WTC11 (cell line): ENCODE measurements at regions of chr4 and their contacts with region 1.

Region 1: DNA sequence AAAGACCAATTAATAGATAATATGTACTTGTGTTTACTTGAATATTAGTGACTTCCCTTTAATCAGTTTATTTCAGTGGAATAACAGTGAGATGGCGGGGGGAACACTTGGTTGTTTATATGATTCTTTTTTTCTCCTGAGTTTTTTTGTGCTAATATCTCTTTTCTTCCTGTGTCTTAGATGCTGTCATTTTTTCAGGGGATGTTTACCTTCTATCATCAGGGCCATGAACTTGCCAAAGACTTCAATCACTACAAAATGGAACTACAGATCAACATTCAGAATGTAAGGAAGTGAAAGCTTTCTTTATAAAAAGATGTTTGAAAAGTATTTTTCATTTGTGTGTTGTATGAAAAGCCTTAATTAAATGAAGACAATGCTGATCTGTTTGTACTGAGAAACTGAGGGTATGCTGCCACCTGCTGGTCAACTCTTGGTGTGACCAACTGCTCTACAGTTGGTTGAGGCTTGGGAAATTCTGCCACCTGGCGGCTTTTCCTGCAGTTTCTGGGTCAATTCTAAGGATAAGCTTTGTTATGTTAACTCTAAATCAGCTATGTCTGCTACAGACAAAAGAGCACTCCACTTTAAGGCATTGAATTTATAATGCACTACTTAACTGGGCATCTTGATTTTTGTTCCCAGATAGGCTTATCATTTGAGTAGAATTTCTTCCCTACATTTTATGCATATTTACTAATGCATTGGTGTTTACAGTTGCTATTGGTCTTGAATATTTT is 134.8 kb downstream of the ARHGAP10 start:
- DNase-seq: peak; percentile 95
- ATAC-seq: peak; percentile 87
- H3K4me3 Mint-ChIP-seq: peak overlapping the region; percentile 0; the same call in 1 of the 2 replicates
- H3K27ac Mint-ChIP-seq: peak overlapping the region; percentile 75
- H3K4me1 Mint-ChIP-seq: peaks cover 43% of the 10 kb centered on the region
- H3K27me3 Mint-ChIP-seq: no peaks in the 10 kb centered on the region
- CTCF ChIP-seq: peak; percentile 97

Region 2: GRCh38 chr4:147518846-147519767 is 347.6 kb before region 1 on chr4:
- CTCF ChIA-PET with region 1: interaction called, 35 read pairs
- POLR2A ChIA-PET with region 1: no interaction called
- DNase-seq: peak; percentile 70
- ATAC-seq: peak; percentile 87
- H3K4me3 Mint-ChIP-seq: no peak overlapping the region
- H3K27ac Mint-ChIP-seq: no peak overlapping the region
- H3K4me1 Mint-ChIP-seq: no peaks in the 10 kb centered on the region
- H3K27me3 Mint-ChIP-seq: no peaks in the 10 kb centered on the region
- CTCF ChIP-seq: peak; percentile 79

Region 3: DNA sequence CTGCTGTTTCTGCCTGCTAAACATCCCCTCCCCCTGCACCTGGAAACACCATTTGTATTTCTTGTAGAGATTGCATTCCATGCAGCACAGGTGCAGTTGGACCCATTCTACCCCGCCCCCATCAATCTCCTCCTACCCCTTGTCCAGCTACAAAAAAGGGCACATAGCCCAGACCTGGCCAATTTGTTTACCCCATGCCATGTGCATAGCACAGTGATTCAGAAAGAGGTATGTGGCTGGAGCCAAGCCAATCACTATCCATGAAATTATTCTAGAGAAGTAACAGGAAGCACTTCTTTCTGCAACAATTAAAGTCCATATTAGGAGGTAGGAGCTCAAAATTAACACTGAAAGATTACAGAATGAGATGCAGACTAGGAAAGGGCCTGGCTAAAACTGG is 269.7 kb before region 1 on chr4:
- CTCF ChIA-PET with region 1: interaction called, 48 read pairs
- POLR2A ChIA-PET with region 1: no interaction called
- DNase-seq: no peak
- ATAC-seq: peak; percentile 35; the same call in 1 of the 2 replicates
- H3K4me3 Mint-ChIP-seq: no peak overlapping the region
- H3K27ac Mint-ChIP-seq: no peak overlapping the region
- H3K4me1 Mint-ChIP-seq: peaks cover 20% of the 10 kb centered on the region
- H3K27me3 Mint-ChIP-seq: no peaks in the 10 kb centered on the region
- CTCF ChIP-seq: no peak

Region 4: DNA sequence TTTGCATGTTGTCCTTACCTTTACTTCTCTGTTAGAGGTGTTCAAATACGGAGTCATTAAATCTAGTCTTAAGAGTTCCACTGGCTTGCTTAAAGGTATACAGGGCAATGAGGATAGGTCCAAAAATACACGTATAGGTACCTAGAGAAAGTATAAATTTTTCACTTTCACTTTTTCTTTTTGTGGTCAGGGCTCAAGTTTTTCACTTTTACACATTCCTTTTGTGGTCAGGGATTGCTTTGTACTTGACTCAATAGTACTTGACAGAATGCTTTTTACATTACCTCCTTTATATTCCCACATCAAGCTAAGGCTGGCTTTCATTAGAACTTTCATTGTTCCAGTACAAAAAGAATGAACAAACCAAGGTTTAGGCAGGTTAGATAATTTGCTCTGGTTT is 227.8 kb before region 1 on chr4:
- CTCF ChIA-PET with region 1: interaction called, 21 read pairs
- POLR2A ChIA-PET with region 1: no interaction called
- DNase-seq: no peak
- ATAC-seq: no peak
- H3K4me3 Mint-ChIP-seq: no peak overlapping the region
- H3K27ac Mint-ChIP-seq: no peak overlapping the region
- H3K4me1 Mint-ChIP-seq: peaks cover 25% of the 10 kb centered on the region
- H3K27me3 Mint-ChIP-seq: no peaks in the 10 kb centered on the region
- CTCF ChIP-seq: no peak

Region 5: DNA sequence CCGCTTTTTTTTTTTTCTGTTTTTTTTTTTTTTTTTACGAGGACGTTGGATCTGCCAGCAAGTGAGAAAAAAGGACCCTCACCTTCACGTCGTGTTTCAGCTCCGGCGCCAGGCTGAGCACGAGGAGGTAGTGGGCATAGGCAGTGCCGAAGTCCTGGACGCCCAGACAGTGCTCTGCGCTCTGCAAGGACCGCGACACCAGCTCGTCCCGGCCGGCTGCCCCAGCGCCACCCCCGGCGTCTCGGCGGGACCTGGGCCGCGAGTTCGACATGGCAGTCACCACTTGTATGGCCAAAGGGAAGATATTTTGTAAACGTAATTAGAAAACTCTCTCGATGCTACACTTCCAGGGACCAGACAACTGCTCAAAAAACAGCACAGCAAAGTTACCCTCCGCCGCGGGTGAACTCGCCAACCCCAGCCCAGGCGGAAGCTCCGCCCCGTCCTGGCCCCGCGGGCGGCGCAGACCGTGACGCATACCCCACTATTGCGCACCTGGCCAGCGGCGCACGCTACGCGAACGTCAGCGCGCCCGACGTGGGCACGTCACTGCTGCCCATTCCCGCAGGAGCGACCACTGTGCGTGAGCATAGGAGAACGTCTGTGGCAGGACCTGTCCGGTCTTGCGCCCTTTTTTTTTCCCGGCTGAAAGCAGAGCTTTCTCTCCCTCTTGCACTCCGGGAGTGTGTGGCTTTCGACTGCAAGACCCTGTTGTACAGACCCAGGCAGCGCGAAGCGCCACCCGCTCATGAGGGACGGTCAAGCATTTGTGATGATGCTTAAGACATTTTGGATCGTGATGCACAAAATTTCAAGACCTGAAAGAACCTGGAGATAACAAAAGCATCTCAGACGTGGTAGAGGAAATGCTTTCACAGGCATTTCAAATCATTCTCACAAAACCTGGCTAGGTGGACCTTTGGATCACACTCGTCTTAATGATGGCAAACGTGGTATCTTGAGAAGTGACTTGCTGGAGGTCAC is 182.7 kb before region 1 on chr4 and contains the start of gene PRMT9:
- CTCF ChIA-PET with region 1: interaction called, 34 read pairs
- POLR2A ChIA-PET with region 1: no interaction called
- DNase-seq: peak; percentile 83
- ATAC-seq: peak; percentile 93
- H3K4me3 Mint-ChIP-seq: peak within 1 kb of the TSS; percentile 84
- H3K27ac Mint-ChIP-seq: peak within 1 kb of the TSS; percentile 97
- H3K4me1 Mint-ChIP-seq: peaks cover 20% of the 10 kb centered on the region
- H3K27me3 Mint-ChIP-seq: peaks cover 4% of the 10 kb centered on the region; the same call in 1 of the 2 replicates
- CTCF ChIP-seq: no peak
- total RNA-seq, gene PRMT9: 9.5 to 11.4 TPM (median 10.4 TPM) in 3 replicates

Region 6: GRCh38 chr4:147731580-147732517 is 134.9 kb before region 1 on chr4 and contains the start of gene ARHGAP10:
- CTCF ChIA-PET with region 1: interaction called, 26 read pairs
- POLR2A ChIA-PET with region 1: interaction called, 3 read pairs
- DNase-seq: peak; percentile 63
- ATAC-seq: peak; percentile 48
- H3K4me3 Mint-ChIP-seq: peak within 1 kb of the TSS; percentile 84
- H3K27ac Mint-ChIP-seq: peak within 1 kb of the TSS; percentile 83; the same call in 1 of the 2 replicates
- H3K4me1 Mint-ChIP-seq: peaks cover 45% of the 10 kb centered on the region
- H3K27me3 Mint-ChIP-seq: peaks cover 74% of the 10 kb centered on the region
- CTCF ChIP-seq: no peak
- total RNA-seq, gene ARHGAP10: 7.1 to 9.6 TPM (median 8.0 TPM) in 3 replicates

Region 7: GRCh38 chr4:147853706-147854105 is 13.0 kb before region 1 on chr4:
- CTCF ChIA-PET with region 1: interaction called, 18 read pairs
- POLR2A ChIA-PET with region 1: no interaction called
- DNase-seq: no peak
- ATAC-seq: no peak
- H3K4me3 Mint-ChIP-seq: no peak overlapping the region
- H3K27ac Mint-ChIP-seq: no peak overlapping the region
- H3K4me1 Mint-ChIP-seq: peaks cover 15% of the 10 kb centered on the region
- H3K27me3 Mint-ChIP-seq: no peaks in the 10 kb centered on the region
- CTCF ChIP-seq: no peak

Region 8: DNA sequence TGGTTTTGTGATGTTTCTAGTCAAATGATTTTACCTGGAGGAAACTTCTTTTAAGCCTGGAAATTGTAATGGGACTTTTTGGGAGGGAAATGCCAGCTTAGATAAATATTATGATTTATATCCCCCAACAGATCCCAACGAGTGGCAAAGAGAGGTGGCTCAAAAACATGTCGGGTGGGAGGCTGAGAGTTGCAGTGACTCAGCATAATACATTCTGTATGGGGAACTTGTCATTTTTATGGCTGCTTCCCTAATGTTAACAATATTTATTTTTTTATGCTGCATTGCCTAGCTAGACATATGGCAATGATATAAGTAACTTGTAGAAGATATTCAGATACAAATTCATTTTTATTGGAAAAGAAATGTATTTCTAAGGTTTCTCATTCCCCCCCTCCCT is 84.1 kb after region 1 on chr4:
- CTCF ChIA-PET with region 1: no interaction called
- POLR2A ChIA-PET with region 1: no interaction called
- DNase-seq: no peak
- ATAC-seq: no peak
- H3K4me3 Mint-ChIP-seq: no peak overlapping the region
- H3K27ac Mint-ChIP-seq: peak overlapping the region; percentile 66
- H3K4me1 Mint-ChIP-seq: peaks cover 11% of the 10 kb centered on the region
- H3K27me3 Mint-ChIP-seq: no peaks in the 10 kb centered on the region
- CTCF ChIP-seq: no peak

Region 9: DNA sequence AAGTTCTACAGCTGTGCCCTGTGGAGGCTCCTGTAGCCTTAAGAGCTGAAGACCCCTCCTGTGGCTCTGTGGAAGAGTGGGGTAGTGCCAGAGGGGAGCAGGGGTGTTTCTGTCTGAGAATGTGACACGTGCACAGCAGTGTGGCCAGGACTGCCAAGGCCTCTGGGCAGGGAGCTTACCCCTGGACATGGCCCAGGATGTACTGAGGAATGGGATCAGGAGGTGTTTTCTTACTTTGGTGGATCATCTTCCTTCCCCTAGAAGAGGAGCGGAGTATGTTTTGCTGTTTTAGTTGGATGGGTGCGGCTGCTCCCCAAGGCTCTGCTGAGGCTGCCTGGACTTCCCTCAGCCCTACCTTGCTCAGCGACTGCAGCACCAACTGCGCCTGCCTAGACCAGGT is 207.8 kb after region 1 on chr4:
- CTCF ChIA-PET with region 1: no interaction called
- POLR2A ChIA-PET with region 1: no interaction called
- DNase-seq: no peak
- ATAC-seq: no peak
- H3K4me3 Mint-ChIP-seq: no peak overlapping the region
- H3K27ac Mint-ChIP-seq: no peak overlapping the region
- H3K4me1 Mint-ChIP-seq: 0 out of 2 replicates have a peak, but pooled peaks cover 11% of the 10 kb centered on the region
- H3K27me3 Mint-ChIP-seq: peaks cover 4% of the 10 kb centered on the region; the same call in 1 of the 2 replicates
- CTCF ChIP-seq: no peak